Activated naive CD4-positive, alpha-beta T cell treated with anti-CD3 and anti-CD28 coated beads for 36 hours (primary cell): ENCODE measurements at regions of chr11 and their contacts with region 1.

Region 1: GRCh38 chr11:61967116-61967923 is at the start of gene FTH1:
- DNase-seq: peak; percentile 85
- H3K4me3 Mint-ChIP-seq: peak within 1 kb of the TSS; percentile 93
- H3K27ac Mint-ChIP-seq: peak within 1 kb of the TSS; percentile 94
- H3K4me1 Mint-ChIP-seq: peaks cover 67% of the 10 kb centered on the region
- H3K27me3 Mint-ChIP-seq: no peaks in the 10 kb centered on the region
- total RNA-seq, gene FTH1: 1,302 to 1,352 TPM

Region 2: DNA sequence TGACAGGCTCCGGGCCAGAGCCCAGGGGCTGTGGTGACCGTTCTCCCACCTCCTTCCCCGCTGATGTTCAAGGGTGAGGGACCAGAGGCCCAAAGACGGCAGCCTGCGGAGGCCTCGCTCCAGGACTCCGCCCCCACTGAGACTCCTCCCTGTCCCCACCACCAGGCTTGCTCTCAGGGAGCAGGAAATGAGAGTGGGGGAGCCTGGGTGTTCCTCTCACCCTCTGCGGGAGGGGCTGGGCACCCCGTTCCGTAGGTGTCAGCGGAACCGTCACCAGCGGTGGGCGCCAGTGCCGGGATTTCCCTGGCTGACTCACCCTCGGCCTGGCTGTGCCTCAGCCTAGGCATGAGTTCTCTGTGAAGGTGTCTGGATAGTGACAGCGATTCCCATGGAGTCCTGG is 271.4 kb before region 1 on chr11:
- CTCF ChIA-PET with region 1: no interaction called
- intact Hi-C with region 1: loop called (anchors 5 kb)
- DNase-seq: peak; percentile 98
- H3K4me3 Mint-ChIP-seq: no peak overlapping the region
- H3K27ac Mint-ChIP-seq: no peak overlapping the region
- H3K4me1 Mint-ChIP-seq: peaks cover 28% of the 10 kb centered on the region
- H3K27me3 Mint-ChIP-seq: no peaks in the 10 kb centered on the region

Region 3: GRCh38 chr11:61728940-61729219 is 238.4 kb before region 1 on chr11:
- CTCF ChIA-PET with region 1: no interaction called
- intact Hi-C with region 1: no loop called
- DNase-seq: no peak
- H3K4me3 Mint-ChIP-seq: no peak overlapping the region
- H3K27ac Mint-ChIP-seq: no peak overlapping the region
- H3K4me1 Mint-ChIP-seq: peaks cover 2% of the 10 kb centered on the region
- H3K27me3 Mint-ChIP-seq: no peaks in the 10 kb centered on the region

Region 4: GRCh38 chr11:61834278-61835048 is 132.9 kb before region 1 on chr11:
- CTCF ChIA-PET with region 1: no interaction called
- intact Hi-C with region 1: no loop called
- DNase-seq: peak; percentile 85
- H3K4me3 Mint-ChIP-seq: no peak overlapping the region
- H3K27ac Mint-ChIP-seq: peak overlapping the region; percentile 84
- H3K4me1 Mint-ChIP-seq: peaks cover 29% of the 10 kb centered on the region
- H3K27me3 Mint-ChIP-seq: peaks cover 17% of the 10 kb centered on the region

Region 5: DNA sequence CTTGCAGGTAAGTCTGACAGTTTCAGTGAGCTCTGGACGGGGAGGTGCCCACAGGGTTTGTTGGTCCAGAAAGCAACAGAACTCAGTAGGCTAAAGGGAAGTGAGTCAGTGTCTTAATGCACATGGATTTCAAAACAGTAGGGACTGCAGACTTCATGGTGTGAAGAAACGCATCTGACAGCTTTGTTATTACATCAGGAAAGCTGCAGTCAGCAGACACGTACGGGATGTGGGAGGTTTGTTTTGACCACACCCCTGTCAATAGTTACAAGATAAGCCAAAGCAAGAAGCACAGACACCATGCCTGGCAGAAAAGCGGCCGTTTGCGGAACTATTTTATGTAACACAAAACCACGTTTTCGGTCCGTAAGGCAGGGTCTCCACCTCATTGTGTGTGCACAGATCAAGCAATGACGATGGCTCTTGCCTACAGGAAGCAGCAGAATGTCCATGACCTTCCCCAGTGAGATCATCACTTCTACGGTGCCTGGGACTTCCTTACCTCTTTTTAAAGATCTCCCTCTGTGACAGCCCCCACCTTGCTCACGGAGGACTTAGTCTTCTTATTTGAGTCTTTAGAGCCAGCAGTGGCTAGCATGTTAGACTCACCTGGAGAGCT is 58.3 kb after region 1 on chr11:
- CTCF ChIA-PET with region 1: interaction called, 3 read pairs
- intact Hi-C with region 1: loop called (anchors 1 kb)
- DNase-seq: peak; percentile 86
- H3K4me3 Mint-ChIP-seq: peak overlapping the region; percentile 55
- H3K27ac Mint-ChIP-seq: peak overlapping the region; percentile 89
- H3K4me1 Mint-ChIP-seq: peaks cover 17% of the 10 kb centered on the region
- H3K27me3 Mint-ChIP-seq: no peaks in the 10 kb centered on the region

Region 6: DNA sequence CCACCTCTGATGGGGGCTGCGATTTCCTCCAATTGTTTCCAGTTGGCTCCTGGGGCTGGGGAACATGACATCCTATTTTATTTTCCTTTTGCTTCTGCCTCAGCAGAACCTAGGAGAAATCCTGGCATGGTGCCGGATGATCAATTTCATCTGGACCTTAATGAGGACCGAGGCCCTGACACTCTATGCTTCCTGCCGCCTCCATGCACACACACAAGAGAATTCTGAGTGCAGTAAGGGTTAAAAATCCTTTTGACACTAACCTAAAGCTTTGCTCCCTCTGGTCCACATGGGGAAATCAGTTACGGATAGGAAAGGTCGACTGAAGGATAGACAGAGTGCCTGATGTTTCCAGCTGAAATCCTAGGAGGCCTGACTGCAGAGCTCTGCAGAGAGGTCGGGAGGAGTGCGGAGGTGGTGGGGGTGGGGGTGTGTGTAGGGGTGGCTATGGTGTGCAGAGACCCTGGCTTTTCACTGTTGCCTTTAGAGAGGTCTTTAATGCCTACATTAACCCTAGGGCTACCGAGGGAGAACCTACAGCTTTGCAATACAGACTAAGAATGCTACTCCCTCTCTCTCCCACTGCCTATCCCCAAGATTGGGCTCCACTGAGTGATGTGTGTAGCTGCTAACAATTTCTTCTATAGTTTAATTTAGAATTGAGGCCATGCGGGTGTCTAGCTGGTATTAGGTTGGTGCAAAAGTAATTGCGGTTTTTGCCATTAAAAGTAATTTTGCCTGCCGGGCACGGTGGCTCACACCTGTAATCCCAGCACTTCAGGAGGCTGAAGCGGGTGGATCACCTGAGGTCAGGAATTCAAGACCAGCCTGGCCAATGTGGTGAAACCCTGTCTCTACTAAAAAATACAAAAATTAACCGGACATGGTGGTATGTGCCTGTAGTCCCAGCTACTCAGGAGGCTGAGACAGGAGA is 102.9 kb after region 1 on chr11:
- CTCF ChIA-PET with region 1: no interaction called
- intact Hi-C with region 1: loop called (anchors 5 kb)
- DNase-seq: no peak
- H3K4me3 Mint-ChIP-seq: no peak overlapping the region
- H3K27ac Mint-ChIP-seq: no peak overlapping the region
- H3K4me1 Mint-ChIP-seq: peaks cover 5% of the 10 kb centered on the region
- H3K27me3 Mint-ChIP-seq: no peaks in the 10 kb centered on the region